Activated B cell treated with CpG ODN at 0.5 μM for 24 hours (primary cell): ENCODE measurements at regions of chr11 and their contacts with region 1.

Region 1: GRCh38 chr11:72736452-72737069 is 15.6 kb downstream of the ARAP1 start:
- DNase-seq: peak; percentile 47
- ATAC-seq: peak; percentile 41
- H3K4me3 Mint-ChIP-seq: peak overlapping the region; percentile 82
- H3K27ac Mint-ChIP-seq: peak overlapping the region; percentile 99
- H3K4me1 Mint-ChIP-seq: peaks cover 83% of the 10 kb centered on the region
- H3K27me3 Mint-ChIP-seq: no peaks in the 10 kb centered on the region
- CTCF ChIP-seq: no peak

Region 2: DNA sequence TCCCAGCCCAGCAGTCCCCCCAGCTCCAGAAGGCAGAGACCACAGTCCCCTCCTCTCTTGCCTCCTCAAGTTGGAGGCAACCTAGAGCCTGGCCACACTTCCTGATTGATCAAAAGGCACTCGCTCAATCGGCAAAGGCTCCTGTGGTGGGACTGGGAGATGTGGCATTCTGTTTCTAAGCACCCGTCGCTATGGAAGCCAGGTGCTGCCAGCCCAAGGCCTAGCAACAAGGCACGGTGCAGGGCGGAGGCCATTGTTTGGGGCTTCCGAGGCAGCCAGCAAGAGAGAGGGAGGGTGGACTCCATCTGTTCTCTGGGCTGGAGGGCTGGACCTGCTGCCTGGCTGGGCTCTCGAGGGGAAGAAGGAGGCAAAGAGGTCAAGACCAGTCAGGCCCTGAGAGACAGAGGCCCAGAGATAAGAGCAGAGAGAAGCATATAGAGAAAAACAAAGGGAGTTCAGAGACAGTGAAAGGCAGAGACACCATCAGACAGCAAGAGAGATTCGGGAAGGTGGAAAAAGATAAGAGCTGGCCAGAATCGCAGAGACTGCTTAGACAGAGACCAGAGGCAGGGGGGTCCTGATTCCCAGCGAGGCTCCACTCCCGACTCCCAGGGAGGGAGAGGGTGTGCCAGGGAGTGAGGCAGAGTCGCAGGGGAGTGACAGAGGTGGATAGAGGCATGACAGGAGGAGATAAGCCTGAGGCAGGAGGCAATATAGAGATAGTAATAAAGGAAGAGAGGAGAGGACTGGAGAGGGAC is 83.5 kb before region 1 on chr11:
- CTCF ChIA-PET with region 1: no interaction called
- POLR2A ChIA-PET with region 1: no interaction called
- intact Hi-C with region 1: no loop called
- DNase-seq: no peak
- ATAC-seq: no peak
- H3K4me3 Mint-ChIP-seq: no peak overlapping the region
- H3K27ac Mint-ChIP-seq: no peak overlapping the region
- H3K4me1 Mint-ChIP-seq: no peaks in the 10 kb centered on the region
- H3K27me3 Mint-ChIP-seq: peaks cover 2% of the 10 kb centered on the region
- CTCF ChIP-seq: no peak

Region 3: GRCh38 chr11:72752088-72752914 is 15.7 kb after region 1 on chr11 and contains the start of gene ARAP1:
- CTCF ChIA-PET with region 1: no interaction called
- POLR2A ChIA-PET with region 1: interaction called, 14 read pairs
- intact Hi-C with region 1: loop called (anchors 1 kb)
- DNase-seq: peak; percentile 74
- ATAC-seq: peak; percentile 89
- H3K4me3 Mint-ChIP-seq: peak within 1 kb of the TSS; percentile 91
- H3K27ac Mint-ChIP-seq: peak within 1 kb of the TSS; percentile 89
- H3K4me1 Mint-ChIP-seq: peaks cover 53% of the 10 kb centered on the region
- H3K27me3 Mint-ChIP-seq: no peaks in the 10 kb centered on the region
- CTCF ChIP-seq: no peak
- total RNA-seq, gene ARAP1: 113 and 139 TPM in 2 replicates

Region 4: DNA sequence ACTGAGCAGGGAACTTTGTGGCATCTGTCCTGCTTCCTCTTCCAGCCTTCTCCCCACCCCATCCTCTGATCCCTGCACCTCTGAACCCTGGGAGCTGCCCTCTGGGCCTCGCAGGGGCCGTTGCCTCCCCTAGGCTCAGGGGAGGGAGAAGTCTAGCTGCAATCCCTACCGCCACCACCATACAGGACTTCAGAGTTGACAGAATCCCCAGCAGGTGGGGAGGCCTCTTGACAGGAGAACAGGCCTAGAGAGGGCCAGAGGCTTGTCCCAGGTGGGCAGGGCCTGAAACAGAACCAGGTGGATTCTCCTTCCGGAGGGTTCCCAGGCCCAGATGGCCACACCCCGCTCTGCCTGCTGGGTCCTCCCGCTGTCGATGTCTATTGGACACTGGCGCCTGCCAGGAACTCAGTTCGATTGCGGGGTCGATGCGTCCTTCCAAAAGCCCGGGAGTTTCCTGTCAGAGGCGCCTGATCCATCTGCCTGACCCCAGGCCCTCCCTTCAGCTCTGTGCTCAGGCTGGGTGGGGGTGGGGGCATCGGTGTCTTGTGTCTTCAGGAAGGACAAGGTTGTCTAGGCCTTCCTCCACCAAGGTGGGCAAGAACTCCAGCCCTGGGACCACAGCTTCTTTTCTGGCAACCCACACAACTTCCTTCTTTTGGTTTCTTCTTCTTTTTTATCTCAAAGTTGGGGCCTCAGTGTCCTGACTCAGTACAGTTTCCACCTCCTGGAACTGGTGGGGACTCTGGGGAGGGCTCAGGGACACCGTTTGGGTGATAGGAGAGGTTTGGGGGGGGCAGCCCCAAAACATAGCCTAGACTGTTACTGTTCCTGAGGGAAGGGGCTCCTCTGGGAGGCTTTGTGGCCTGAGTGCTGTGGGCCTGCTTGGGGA is 50.9 kb after region 1 on chr11:
- CTCF ChIA-PET with region 1: interaction called, 30 read pairs
- POLR2A ChIA-PET with region 1: interaction called, 28 read pairs
- intact Hi-C with region 1: no loop called
- DNase-seq: peak; percentile 33
- ATAC-seq: peak; percentile 79
- H3K4me3 Mint-ChIP-seq: peak overlapping the region; percentile 50
- H3K27ac Mint-ChIP-seq: peak overlapping the region; percentile 90
- H3K4me1 Mint-ChIP-seq: peaks cover 39% of the 10 kb centered on the region
- H3K27me3 Mint-ChIP-seq: no peaks in the 10 kb centered on the region
- CTCF ChIP-seq: no peak

Region 5: GRCh38 chr11:73047773-73048371 is 311.3 kb after region 1 on chr11:
- CTCF ChIA-PET with region 1: no interaction called
- POLR2A ChIA-PET with region 1: no interaction called
- intact Hi-C with region 1: loop called (anchors 5 kb)
- DNase-seq: no peak
- ATAC-seq: peak; percentile 85
- H3K4me3 Mint-ChIP-seq: peak overlapping the region; percentile 64
- H3K27ac Mint-ChIP-seq: peak overlapping the region; percentile 93
- H3K4me1 Mint-ChIP-seq: peaks cover 74% of the 10 kb centered on the region
- H3K27me3 Mint-ChIP-seq: no peaks in the 10 kb centered on the region
- CTCF ChIP-seq: no peak

Region 6: GRCh38 chr11:73384872-73385689 is 648.5 kb after region 1 on chr11:
- CTCF ChIA-PET with region 1: no interaction called
- POLR2A ChIA-PET with region 1: no interaction called
- intact Hi-C with region 1: loop called (anchors 5 kb)
- DNase-seq: peak; percentile 82
- ATAC-seq: peak; percentile 63
- H3K4me3 Mint-ChIP-seq: peak overlapping the region; percentile 76
- H3K27ac Mint-ChIP-seq: peak overlapping the region; percentile 89
- H3K4me1 Mint-ChIP-seq: peaks cover 100% of the 10 kb centered on the region
- H3K27me3 Mint-ChIP-seq: no peaks in the 10 kb centered on the region
- CTCF ChIP-seq: no peak